BJ (cell line): ENCODE measurements at regions of chr5 and their contacts with region 1.

Region 1: DNA sequence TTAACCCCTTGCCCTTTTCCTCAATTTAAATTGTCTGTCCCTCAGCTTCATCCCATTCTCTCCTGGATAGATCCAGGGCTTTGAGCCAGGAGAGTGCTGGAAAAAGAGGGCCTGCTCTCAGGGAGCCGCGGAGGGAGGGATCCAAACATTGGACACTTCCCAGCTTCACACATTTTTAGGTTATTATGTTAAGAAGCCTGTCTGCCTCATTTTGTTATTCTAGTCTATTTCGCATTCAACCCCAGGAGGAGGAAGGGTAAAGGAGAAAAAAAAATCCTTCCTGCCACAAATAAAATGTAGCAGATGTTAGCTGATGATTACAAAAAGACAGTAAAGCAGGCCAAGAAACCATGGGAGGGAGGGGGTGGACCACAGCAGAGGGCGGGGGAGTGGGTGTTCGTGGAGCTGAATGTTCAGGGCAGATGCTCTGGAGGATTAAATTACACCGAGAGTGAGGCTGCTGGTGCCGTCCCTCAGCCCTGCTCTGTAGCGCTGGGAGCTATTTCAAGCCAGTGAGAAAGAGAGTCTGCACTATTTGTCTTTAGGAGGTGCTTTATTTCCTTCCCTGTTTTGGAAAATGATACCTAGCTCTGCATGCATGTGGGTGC is 60.6 kb upstream of the ZFR start:
- DNase-seq: peak; percentile 97
- H3K4me3 ChIP-seq: no peak overlapping the region
- H3K27me3 ChIP-seq: no peaks in the 10 kb centered on the region
- CTCF ChIP-seq: no peak

Region 2: GRCh38 chr5:32571128-32571527 is 66.0 kb after region 1 on chr5:
- CTCF ChIA-PET with region 1: no interaction called
- POLR2A ChIA-PET with region 1: interaction called, 11 read pairs
- DNase-seq: no peak
- H3K4me3 ChIP-seq: no peak overlapping the region
- H3K27me3 ChIP-seq: no peaks in the 10 kb centered on the region
- CTCF ChIP-seq: no peak